ENCODE measurements at regions of chr2 and their contacts with region 1.

Region 1: GRCh38 chr2:97885841-97886240 is 109.9 kb downstream of the TMEM131 start:
- DNase-seq: no peak
- CTCF ChIP-seq: no peak

Region 2: DNA sequence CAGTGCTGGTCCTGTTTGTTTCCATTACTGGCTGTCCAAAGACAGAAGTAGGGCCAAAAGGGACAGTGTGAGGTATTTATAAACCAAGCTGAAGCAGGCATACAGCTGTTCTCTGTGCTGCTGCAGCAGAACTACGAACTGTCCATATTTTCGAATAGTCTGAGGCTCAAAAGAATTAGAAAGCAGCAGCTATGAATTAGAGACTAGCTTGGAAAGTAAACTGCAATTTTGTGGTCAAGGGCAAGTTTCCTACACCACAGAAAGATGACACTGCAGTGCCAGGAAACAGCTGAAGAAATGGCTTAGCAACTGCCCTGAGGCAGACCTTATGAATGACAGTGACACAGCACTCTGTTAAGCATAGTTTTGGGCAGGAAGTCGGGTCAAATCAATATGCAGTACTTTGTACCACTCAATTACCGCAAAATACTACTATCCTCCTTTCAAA is 15.4 kb before region 1 on chr2:
- CTCF ChIA-PET with region 1: interaction called, 16 read pairs
- POLR2A ChIA-PET with region 1: no interaction called
- DNase-seq: peak; percentile 71
- CTCF ChIP-seq: peak; percentile 27

Measured in GM10248 (cell line).